Thyroid gland (tissue), 4 donors: ENCODE measurements at regions of chr5 and their contacts with region 1.

Region 1: GRCh38 chr5:140357726-140358093 is 2.3 kb upstream of the SLC4A9 start:
- DNase-seq: peak; percentile 82 to 85
- H3K4me3 ChIP-seq: no peak overlapping the region
- H3K27ac ChIP-seq: no peak overlapping the region
- H3K4me1 ChIP-seq: peaks cover 0 to 10% of the 10 kb centered on the region in 2 donors
- H3K27me3 ChIP-seq: no peaks in the 10 kb centered on the region
- CTCF ChIP-seq: peak; percentile 77 to 95 (median 86)
- POLR2A ChIP-seq: no peak

Region 2: GRCh38 chr5:140169410-140169809 is 188.3 kb before region 1 on chr5:
- intact Hi-C with region 1: loop called (anchors 10 kb)
- DNase-seq: no peak
- H3K4me3 ChIP-seq: no peak overlapping the region
- H3K27ac ChIP-seq: no peak overlapping the region
- H3K4me1 ChIP-seq: peaks cover 8 to 9% of the 10 kb centered on the region in 2 donors
- H3K27me3 ChIP-seq: no peaks in the 10 kb centered on the region
- CTCF ChIP-seq: no peak
- POLR2A ChIP-seq: no peak

Region 3: GRCh38 chr5:140875066-140876065 is 517.7 kb after region 1 on chr5 and contains the start of gene PCDHA12:
- intact Hi-C with region 1: no loop called
- DNase-seq: no peak
- H3K4me3 ChIP-seq: no peak within 1 kb of the TSS
- H3K27ac ChIP-seq: peak within 1 kb of the TSS in 1 of 3 donors; percentile 59
- H3K4me1 ChIP-seq: no peaks in the 10 kb centered on the region
- H3K27me3 ChIP-seq: no peaks in the 10 kb centered on the region
- CTCF ChIP-seq: peak; percentile 14 to 52 (median 34)
- POLR2A ChIP-seq: no peak
- total RNA-seq, gene PCDHA12: 3.3 to 9.6 (median 6.1) TPM